PC-9 (cell line): ENCODE measurements at regions of chr1 and their contacts with region 1.

Region 1: GRCh38 chr1:23908493-23909341 is 4.4 kb downstream of the CNR2 start:
- DNase-seq: no peak
- H3K4me3 ChIP-seq: no peak overlapping the region
- H3K27ac ChIP-seq: no peak overlapping the region
- H3K4me1 ChIP-seq: peaks cover 28% of the 10 kb centered on the region
- H3K27me3 ChIP-seq: no peaks in the 10 kb centered on the region
- CTCF ChIP-seq: no peak

Region 2: GRCh38 chr1:23407016-23407634 is 501.6 kb before region 1 on chr1:
- CTCF ChIA-PET with region 1: no interaction called
- POLR2A ChIA-PET with region 1: no interaction called
- intact Hi-C with region 1: no loop called
- DNase-seq: no peak
- H3K4me3 ChIP-seq: no peak overlapping the region
- H3K27ac ChIP-seq: no peak overlapping the region
- H3K4me1 ChIP-seq: peaks cover 24% of the 10 kb centered on the region
- H3K27me3 ChIP-seq: no peaks in the 10 kb centered on the region
- CTCF ChIP-seq: no peak

Region 3: DNA sequence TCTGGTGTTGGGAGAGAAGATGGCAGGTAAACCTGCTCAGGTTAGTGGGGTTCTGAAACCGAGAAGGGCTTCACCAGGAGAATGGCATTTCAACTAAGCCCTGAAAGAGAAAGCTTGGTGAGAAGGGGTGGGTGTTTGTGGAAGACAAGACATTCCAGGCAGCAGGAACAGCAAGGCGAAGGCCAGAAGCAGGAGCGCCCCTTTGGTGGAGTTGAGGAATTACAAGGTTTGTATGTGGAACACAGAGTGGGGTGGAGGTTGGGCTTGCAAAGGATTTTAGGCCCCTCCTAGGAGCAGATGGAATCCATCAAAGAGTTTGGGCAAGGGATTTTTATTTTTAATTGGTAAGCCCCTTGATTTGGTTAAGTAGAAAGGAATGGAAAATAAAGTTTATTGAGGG is 190.2 kb before region 1 on chr1:
- CTCF ChIA-PET with region 1: interaction called, 3 read pairs
- POLR2A ChIA-PET with region 1: interaction called, 43 read pairs
- intact Hi-C with region 1: no loop called
- DNase-seq: peak in 1 of 2 experiments; percentile 22
- H3K4me3 ChIP-seq: no peak overlapping the region
- H3K27ac ChIP-seq: no peak overlapping the region
- H3K4me1 ChIP-seq: no peaks in the 10 kb centered on the region
- H3K27me3 ChIP-seq: no peaks in the 10 kb centered on the region
- CTCF ChIP-seq: peak; percentile 70

Region 4: GRCh38 chr1:23800400-23801337 is 108.0 kb before region 1 on chr1 and contains the start of gene GALE:
- CTCF ChIA-PET with region 1: no interaction called
- POLR2A ChIA-PET with region 1: interaction called, 32 read pairs
- intact Hi-C with region 1: no loop called
- DNase-seq: peak; percentile 76 to 93
- H3K4me3 ChIP-seq: peak within 1 kb of the TSS; percentile 72
- H3K27ac ChIP-seq: peak within 1 kb of the TSS; percentile 85
- H3K4me1 ChIP-seq: peaks cover 14% of the 10 kb centered on the region
- H3K27me3 ChIP-seq: no peaks in the 10 kb centered on the region
- CTCF ChIP-seq: no peak
- total RNA-seq, gene GALE: 40.5 and 45.8 TPM in 2 replicates

Region 5: DNA sequence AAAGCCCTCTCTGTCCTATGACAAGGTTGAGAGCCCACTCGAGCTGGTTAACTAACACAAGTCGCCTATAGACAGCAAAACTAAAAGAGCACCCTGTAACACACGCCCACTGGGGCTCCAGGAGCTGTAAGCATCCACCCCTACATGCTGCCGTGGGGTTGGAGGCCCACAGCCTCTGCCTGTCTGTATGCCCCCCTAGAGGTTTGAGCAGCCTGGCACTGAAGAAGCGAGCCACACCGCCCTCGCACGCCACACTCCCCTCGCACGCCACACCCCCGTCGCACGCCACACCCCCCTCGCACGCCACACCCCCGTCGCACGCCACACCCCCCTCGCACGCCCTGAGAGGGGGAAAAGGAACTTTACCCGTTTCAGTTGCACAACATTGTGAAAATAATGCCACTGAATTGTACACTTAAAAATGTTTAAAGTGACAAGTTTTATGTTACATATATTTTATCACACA is 70.3 kb before region 1 on chr1:
- CTCF ChIA-PET with region 1: no interaction called
- POLR2A ChIA-PET with region 1: interaction called, 24 read pairs
- intact Hi-C with region 1: no loop called
- DNase-seq: peak in 1 of 2 experiments; percentile 55
- H3K4me3 ChIP-seq: peak overlapping the region; percentile 54
- H3K27ac ChIP-seq: no peak overlapping the region
- H3K4me1 ChIP-seq: no peaks in the 10 kb centered on the region
- H3K27me3 ChIP-seq: no peaks in the 10 kb centered on the region
- CTCF ChIP-seq: no peak

Region 6: DNA sequence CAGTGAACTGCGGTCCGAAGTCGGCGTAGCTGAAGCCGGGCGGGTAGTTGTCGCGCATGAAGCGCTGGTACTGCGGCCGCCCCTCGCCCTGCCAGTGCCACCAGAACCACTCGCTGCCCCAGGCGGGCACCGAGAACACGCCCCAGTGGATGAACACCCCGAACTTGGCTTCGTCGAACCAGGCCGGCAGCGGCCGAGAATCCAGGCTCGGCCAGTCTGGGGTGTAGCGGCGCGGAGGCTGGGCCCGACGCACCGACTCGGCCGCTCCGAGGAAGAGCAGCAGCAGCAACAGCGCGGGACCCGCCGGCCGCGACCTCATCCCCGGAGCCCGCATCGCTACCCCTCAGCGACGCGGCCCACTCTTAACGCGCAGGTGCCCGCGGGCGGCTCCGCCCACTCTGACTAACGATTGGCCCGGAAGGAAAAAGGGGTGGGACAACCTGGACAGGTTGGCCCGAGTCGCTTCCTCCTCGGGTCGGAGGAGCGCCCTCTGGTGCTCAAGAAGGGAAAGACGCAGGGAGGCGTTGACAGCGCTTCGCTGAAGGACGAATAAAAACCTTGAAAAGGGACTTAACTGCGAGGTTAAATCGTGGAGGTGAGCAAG is 40.7 kb before region 1 on chr1 and contains the start of gene FUCA1:
- CTCF ChIA-PET with region 1: no interaction called
- POLR2A ChIA-PET with region 1: interaction called, 8 read pairs
- intact Hi-C with region 1: loop called (anchors 2 kb)
- DNase-seq: peak; percentile 75 to 93
- H3K4me3 ChIP-seq: peak within 1 kb of the TSS; percentile 64
- H3K27ac ChIP-seq: no peak within 1 kb of the TSS
- H3K4me1 ChIP-seq: peaks cover 21% of the 10 kb centered on the region
- H3K27me3 ChIP-seq: no peaks in the 10 kb centered on the region
- CTCF ChIP-seq: peak; percentile 78
- total RNA-seq, gene FUCA1: 29.0 and 30.9 TPM in 2 replicates

Region 7: DNA sequence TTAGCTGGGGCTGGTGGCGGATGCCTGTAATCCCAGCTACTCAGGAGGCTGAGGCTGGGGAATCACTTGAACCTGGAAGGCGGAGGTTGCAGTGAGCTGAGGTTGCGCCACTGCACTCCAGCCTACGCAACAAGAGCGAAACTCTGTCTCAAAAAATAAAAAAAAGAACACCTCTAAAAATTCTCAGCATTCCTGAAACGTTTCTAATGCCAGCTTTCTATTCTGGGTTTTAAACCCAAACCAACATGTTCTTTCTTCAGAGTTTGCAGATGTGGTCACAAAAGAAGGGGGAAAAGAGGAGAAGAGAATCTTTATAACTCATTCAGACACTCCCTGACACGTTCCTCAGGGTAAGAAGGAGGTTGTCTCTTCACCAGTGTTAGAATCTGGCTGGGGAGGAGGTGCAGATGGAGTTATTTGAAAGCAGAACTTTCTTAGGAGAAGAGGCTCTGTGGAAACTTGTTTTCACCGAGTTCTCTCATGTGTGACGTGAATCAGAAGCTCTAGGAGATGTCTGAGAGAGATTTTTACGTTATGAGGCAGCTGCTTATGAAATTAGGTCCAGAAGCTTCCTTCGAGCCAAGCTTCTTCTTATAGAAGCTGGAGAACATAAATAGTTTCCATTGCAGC is 22.3 kb after region 1 on chr1:
- CTCF ChIA-PET with region 1: no interaction called
- POLR2A ChIA-PET with region 1: interaction called, 13 read pairs
- intact Hi-C with region 1: no loop called
- DNase-seq: no peak
- H3K4me3 ChIP-seq: no peak overlapping the region
- H3K27ac ChIP-seq: no peak overlapping the region
- H3K4me1 ChIP-seq: no peaks in the 10 kb centered on the region
- H3K27me3 ChIP-seq: no peaks in the 10 kb centered on the region
- CTCF ChIP-seq: no peak

Region 8: GRCh38 chr1:23953020-23953419 is 44.3 kb after region 1 on chr1:
- CTCF ChIA-PET with region 1: no interaction called
- POLR2A ChIA-PET with region 1: interaction called, 11 read pairs
- intact Hi-C with region 1: no loop called
- DNase-seq: no peak
- H3K4me3 ChIP-seq: no peak overlapping the region
- H3K27ac ChIP-seq: no peak overlapping the region
- H3K4me1 ChIP-seq: peaks cover 37% of the 10 kb centered on the region
- H3K27me3 ChIP-seq: no peaks in the 10 kb centered on the region
- CTCF ChIP-seq: no peak